ENCODE measurements at regions of chr2 and their contacts with region 1.

Region 1: DNA sequence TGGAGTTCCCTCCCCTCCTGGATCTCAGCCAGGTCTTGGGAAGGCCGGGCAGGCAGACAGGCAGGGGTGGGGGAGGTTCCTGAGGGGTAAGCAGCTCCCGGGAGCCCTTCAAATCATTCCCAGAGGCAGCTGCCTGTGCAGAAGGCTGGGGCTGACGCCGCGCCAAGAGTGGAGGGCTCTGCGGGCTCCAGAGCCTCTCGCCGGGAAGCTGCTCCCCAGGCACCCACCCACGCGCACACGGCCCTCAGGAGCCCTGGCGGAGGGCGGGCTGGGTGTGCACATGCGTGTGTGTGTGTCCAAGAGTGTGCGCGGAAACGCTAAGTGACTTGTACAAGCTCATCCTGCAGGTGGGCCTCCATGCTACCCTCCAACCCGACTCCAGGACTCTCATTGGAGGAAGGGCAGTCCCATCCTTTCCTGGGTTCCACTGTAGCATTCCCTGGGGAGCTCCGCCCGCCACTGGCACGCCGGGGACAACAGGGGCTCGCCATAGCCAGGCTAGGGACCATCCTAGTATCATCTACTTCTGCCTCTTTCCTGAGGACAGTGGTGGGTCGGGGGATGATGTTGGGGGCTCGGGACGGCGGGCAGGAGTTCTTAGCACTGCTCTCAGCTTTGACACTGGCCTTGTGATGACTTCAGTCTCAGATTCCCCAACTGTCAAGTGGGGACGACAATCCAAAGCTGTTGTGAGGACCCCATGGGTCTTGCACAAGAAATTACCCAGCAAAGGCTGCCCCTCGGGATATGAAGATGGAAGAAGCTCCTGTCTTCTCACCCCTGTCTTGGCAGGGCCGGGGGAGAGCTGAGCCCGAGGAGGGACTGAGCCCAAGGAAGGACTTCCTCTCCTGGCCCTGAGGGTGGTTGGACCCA is 50.3 kb downstream of the INHBB start:
- DNase-seq: peak in 1 of 2 experiments; percentile 64
- H3K4me3 ChIP-seq: no peak overlapping the region
- H3K27ac ChIP-seq: peak overlapping the region; percentile 96
- H3K4me1 ChIP-seq: peaks cover 57% of the 10 kb centered on the region
- H3K27me3 ChIP-seq: no peaks in the 10 kb centered on the region
- CTCF ChIP-seq: no peak

Region 2: GRCh38 chr2:120239488-120240287 is 156.6 kb before region 1 on chr2:
- CTCF ChIA-PET with region 1: interaction called, 3 read pairs
- POLR2A ChIA-PET with region 1: interaction called, 5 read pairs
- intact Hi-C with region 1: loop called (anchors 2 kb)
- DNase-seq: peak; percentile 90 to 92
- H3K4me3 ChIP-seq: peak overlapping the region; percentile 41; the same call in 1 of the 2 replicates
- H3K27ac ChIP-seq: peak overlapping the region; percentile 95
- H3K4me1 ChIP-seq: peaks cover 87% of the 10 kb centered on the region
- H3K27me3 ChIP-seq: no peaks in the 10 kb centered on the region
- CTCF ChIP-seq: no peak

Region 3: GRCh38 chr2:120352701-120353590 is 43.3 kb before region 1 on chr2:
- CTCF ChIA-PET with region 1: interaction called, 17 read pairs
- POLR2A ChIA-PET with region 1: interaction called, 4 read pairs
- intact Hi-C with region 1: loop called (anchors 1 kb)
- DNase-seq: peak; percentile 82 to 98
- H3K4me3 ChIP-seq: no peak overlapping the region
- H3K27ac ChIP-seq: peak overlapping the region; percentile 49
- H3K4me1 ChIP-seq: peaks cover 44% of the 10 kb centered on the region
- H3K27me3 ChIP-seq: no peaks in the 10 kb centered on the region
- CTCF ChIP-seq: no peak

Region 4: GRCh38 chr2:120470041-120470965 is 74.1 kb after region 1 on chr2:
- CTCF ChIA-PET with region 1: no interaction called
- POLR2A ChIA-PET with region 1: no interaction called
- intact Hi-C with region 1: no loop called
- DNase-seq: peak; percentile 84 to 97
- H3K4me3 ChIP-seq: no peak overlapping the region
- H3K27ac ChIP-seq: peak overlapping the region; percentile 51
- H3K4me1 ChIP-seq: peaks cover 44% of the 10 kb centered on the region
- H3K27me3 ChIP-seq: no peaks in the 10 kb centered on the region
- CTCF ChIP-seq: no peak

Region 5: DNA sequence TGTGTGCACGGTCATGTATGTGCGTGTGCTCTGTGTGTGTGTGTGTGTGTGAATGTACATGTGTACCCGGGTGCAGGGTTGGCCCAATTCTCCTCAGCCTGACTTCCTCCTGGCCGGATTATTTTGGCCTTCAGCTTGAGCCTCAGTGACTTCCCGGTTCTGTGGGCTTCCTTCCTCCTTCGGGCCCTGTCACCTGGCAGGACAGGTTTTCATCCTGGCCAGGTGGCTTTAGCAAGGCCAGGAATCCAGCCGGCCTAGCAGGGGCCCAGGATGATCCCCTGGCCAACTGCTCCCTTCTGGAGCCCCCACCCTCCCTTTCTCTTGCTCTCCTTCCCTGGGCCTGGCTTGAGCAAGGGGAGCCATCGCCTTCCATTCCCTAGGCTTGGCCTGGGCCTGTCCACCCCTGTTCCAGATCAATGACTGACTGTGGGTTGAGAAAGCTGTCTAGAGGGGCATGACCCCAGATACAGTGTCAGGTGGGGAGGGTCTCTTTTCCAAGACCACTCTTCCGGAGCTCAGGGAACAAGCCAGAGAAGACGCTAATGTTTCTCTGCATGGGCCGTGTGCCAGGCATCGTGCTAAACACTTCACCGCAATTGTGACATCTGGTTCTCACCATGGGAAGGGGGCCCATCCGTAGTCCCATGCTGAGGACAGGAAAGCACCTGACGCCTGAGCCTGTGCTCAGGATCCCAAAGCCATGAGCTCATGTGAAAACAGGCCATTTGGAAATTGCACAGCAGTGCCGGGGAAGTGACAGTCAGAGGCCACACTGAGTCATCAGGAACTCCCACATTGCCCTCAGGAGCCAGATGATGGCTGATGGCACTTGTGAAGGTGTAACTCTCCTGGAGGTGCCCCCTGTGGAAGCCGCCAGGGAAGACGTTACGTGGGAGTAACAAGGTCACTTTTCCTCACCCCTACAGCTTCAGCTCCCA is 90.5 kb after region 1 on chr2:
- CTCF ChIA-PET with region 1: no interaction called
- POLR2A ChIA-PET with region 1: no interaction called
- intact Hi-C with region 1: loop called (anchors 1 kb)
- DNase-seq: peak; percentile 71 to 96
- H3K4me3 ChIP-seq: no peak overlapping the region
- H3K27ac ChIP-seq: peak overlapping the region; percentile 77
- H3K4me1 ChIP-seq: peaks cover 19% of the 10 kb centered on the region
- H3K27me3 ChIP-seq: no peaks in the 10 kb centered on the region
- CTCF ChIP-seq: no peak

Region 6: GRCh38 chr2:120552800-120553481 is 156.7 kb after region 1 on chr2:
- CTCF ChIA-PET with region 1: interaction called, 3 read pairs
- POLR2A ChIA-PET with region 1: no interaction called
- intact Hi-C with region 1: loop called (anchors 2 kb)
- DNase-seq: peak; percentile 90 to 97
- H3K4me3 ChIP-seq: peak overlapping the region; percentile 5; the same call in 1 of the 2 replicates
- H3K27ac ChIP-seq: peak overlapping the region; percentile 38
- H3K4me1 ChIP-seq: peaks cover 36% of the 10 kb centered on the region
- H3K27me3 ChIP-seq: no peaks in the 10 kb centered on the region
- CTCF ChIP-seq: peak; percentile 95

Region 7: GRCh38 chr2:120669121-120669952 is 273.1 kb after region 1 on chr2:
- CTCF ChIA-PET with region 1: no interaction called
- POLR2A ChIA-PET with region 1: no interaction called
- intact Hi-C with region 1: loop called (anchors 1 kb)
- DNase-seq: peak; percentile 87 to 90
- H3K4me3 ChIP-seq: peak overlapping the region; percentile 27; the same call in 1 of the 2 replicates
- H3K27ac ChIP-seq: peak overlapping the region; percentile 69
- H3K4me1 ChIP-seq: peaks cover 28% of the 10 kb centered on the region
- H3K27me3 ChIP-seq: no peaks in the 10 kb centered on the region
- CTCF ChIP-seq: peak; percentile 76

Region 8: DNA sequence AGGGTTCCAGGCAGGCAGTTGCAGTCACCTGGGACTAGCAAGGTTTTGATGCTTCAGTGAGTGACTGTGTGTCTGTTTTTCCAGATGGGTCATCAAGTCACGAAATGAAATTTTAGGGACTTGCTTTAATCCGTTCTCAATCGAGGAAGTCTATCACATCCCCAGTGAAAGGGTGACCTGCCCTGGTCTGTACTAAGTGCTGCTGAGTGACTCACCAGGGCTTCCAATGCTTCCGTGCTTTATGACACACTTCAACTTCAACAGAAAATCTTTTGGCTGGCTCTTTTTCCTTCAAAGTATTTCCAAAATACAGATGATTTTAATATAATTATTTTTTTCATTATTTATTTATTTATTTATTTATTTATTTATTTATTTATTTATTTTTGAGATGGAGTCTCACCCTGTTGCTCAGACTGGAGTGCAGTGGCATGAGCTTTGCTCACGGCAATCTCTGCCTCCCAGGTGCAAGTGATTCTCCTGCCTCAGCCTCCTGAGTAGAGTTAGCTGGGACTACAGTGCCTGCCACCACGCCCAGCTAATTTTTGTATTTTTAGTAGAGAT is 870.4 kb after region 1 on chr2:
- CTCF ChIA-PET with region 1: no interaction called
- POLR2A ChIA-PET with region 1: no interaction called
- intact Hi-C with region 1: no loop called
- DNase-seq: no peak
- H3K4me3 ChIP-seq: no peak overlapping the region
- H3K27ac ChIP-seq: no peak overlapping the region
- H3K4me1 ChIP-seq: peaks cover 9% of the 10 kb centered on the region
- H3K27me3 ChIP-seq: no peaks in the 10 kb centered on the region
- CTCF ChIP-seq: no peak

Measured in PC-9 (cell line).